Colonic mucosa (tissue), 4 donors: ENCODE measurements at regions of chr10 and their contacts with region 1.

Region 1: GRCh38 chr10:127853868-127854768 is 38.6 kb downstream of the CLRN3 start:
- DNase-seq: peak; percentile 58
- H3K4me3 ChIP-seq: no peak overlapping the region
- H3K27ac ChIP-seq: no peak overlapping the region
- H3K4me1 ChIP-seq: no peaks in the 10 kb centered on the region
- H3K27me3 ChIP-seq: no peaks in the 10 kb centered on the region
- CTCF ChIP-seq: peak; percentile 84

Region 2: GRCh38 chr10:127563718-127564553 is 290.2 kb before region 1 on chr10:
- intact Hi-C with region 1: loop called (anchors 5 kb)
- DNase-seq: peak; percentile 42
- H3K4me3 ChIP-seq: no peak overlapping the region
- H3K27ac ChIP-seq: no peak overlapping the region
- H3K4me1 ChIP-seq: no peaks in the 10 kb centered on the region
- H3K27me3 ChIP-seq: no peaks in the 10 kb centered on the region
- CTCF ChIP-seq: peak; percentile 67

Region 3: GRCh38 chr10:127715782-127716378 is 138.2 kb before region 1 on chr10:
- intact Hi-C with region 1: loop called (anchors 5 kb)
- DNase-seq: no peak
- H3K4me3 ChIP-seq: no peak overlapping the region
- H3K27ac ChIP-seq: no peak overlapping the region
- H3K4me1 ChIP-seq: no peaks in the 10 kb centered on the region
- H3K27me3 ChIP-seq: no peaks in the 10 kb centered on the region
- CTCF ChIP-seq: peak; percentile 20

Region 4: DNA sequence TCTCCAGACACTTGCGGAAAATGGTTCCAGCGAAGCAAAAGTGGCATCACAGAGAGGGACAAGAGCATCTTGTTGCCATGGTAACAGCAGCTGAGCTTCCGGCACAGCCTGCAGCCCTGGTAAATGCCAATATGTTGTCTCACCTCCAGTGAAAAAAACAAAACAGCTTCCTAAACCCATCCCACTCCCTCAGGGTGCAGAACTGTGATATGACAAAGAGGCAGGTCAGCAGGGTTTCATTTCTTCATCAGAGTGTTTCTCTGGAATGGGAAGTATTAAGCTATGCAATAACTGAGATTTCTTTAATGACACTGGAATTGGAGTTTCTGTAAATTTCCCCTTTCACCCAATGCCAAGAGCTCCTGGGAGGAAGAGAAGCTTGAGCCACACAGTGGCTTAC is 51.5 kb before region 1 on chr10:
- intact Hi-C with region 1: no loop called
- DNase-seq: no peak
- H3K4me3 ChIP-seq: no peak overlapping the region
- H3K27ac ChIP-seq: no peak overlapping the region
- H3K4me1 ChIP-seq: no peaks in the 10 kb centered on the region
- H3K27me3 ChIP-seq: no peaks in the 10 kb centered on the region
- CTCF ChIP-seq: no peak

Region 5: DNA sequence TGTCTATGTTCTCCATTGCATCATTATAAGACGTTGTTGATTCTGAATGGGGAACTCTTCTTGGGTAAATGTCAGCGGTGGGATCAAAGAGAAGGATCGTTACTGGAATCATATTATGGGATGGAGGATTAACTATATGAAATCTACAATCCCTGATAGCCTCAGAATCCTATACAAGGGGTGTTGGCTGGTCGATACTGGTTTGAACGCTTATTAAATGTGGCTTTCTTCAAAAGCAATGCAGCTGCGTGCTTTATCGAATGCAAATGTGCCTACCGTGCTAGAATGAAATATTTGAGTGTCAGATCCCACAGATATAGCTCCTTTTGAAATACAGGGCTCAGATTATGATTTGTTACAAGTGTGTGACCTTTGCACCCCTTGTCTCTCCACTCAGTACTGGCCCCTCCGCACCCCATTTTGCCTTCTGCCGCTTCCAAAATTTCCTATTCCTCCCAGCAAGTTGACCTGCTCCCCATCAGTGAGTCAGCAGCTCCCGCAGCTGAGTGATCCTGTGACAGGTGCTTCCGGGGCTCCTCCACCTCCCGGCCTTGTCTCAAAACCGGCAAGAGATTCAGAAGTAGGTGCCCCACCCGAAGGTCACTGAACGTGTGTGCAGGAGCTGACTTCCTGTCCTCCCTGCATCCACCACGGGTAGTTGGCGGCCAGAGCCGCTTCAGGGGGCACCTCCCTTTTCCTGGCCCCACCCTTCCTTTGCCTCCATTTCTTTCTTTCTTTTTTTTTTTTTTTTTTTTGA is 129.4 kb after region 1 on chr10:
- intact Hi-C with region 1: no loop called
- DNase-seq: no peak
- H3K4me3 ChIP-seq: no peak overlapping the region
- H3K27ac ChIP-seq: no peak overlapping the region
- H3K4me1 ChIP-seq: no peaks in the 10 kb centered on the region
- H3K27me3 ChIP-seq: no peaks in the 10 kb centered on the region
- CTCF ChIP-seq: no peak

Region 6: GRCh38 chr10:128254476-128254875 is 400.4 kb after region 1 on chr10:
- intact Hi-C with region 1: no loop called
- DNase-seq: no peak
- H3K4me3 ChIP-seq: no peak overlapping the region
- H3K27ac ChIP-seq: no peak overlapping the region
- H3K4me1 ChIP-seq: no peaks in the 10 kb centered on the region
- H3K27me3 ChIP-seq: no peaks in the 10 kb centered on the region
- CTCF ChIP-seq: no peak